Panc1 (cell line): ENCODE measurements at regions of chr12 and their contacts with region 1.

Region 1: DNA sequence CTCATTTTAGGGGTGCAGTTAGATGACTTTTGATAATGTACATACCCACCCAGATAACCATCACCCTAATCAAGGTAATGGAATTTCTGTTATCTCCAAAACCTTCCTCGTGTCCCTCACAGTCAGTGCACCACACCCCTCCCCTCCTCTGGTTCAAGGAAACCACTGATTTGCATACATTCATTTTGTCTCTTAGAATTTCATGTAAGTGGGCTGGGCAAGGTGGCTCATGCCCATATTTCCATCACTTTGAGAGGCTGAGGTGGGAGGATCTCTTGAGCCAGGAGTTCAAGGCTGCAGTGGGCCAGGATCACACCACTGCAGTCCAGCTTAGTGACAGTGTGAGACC is 15.7 kb downstream of the ADIPOR2 start:
- DNase-seq: no peak
- ATAC-seq: no peak
- H3K4me3 ChIP-seq: no peak overlapping the region
- H3K27ac ChIP-seq: no peak overlapping the region
- H3K4me1 ChIP-seq: peaks cover 11% of the 10 kb centered on the region; the same call in 1 of the 2 replicates
- H3K27me3 ChIP-seq: no peaks in the 10 kb centered on the region
- CTCF ChIP-seq: no peak

Region 2: GRCh38 chr12:570435-570925 is 1136.1 kb before region 1 on chr12:
- CTCF ChIA-PET with region 1: no interaction called
- POLR2A ChIA-PET with region 1: interaction called, 10 read pairs
- in situ Hi-C with region 1: no loop called
- intact Hi-C with region 1: no loop called
- DNase-seq: peak; percentile 46
- ATAC-seq: peak; percentile 82
- H3K4me3 ChIP-seq: peak overlapping the region; percentile 53 to 78
- H3K27ac ChIP-seq: peak overlapping the region; percentile 98
- H3K4me1 ChIP-seq: peaks cover 20% of the 10 kb centered on the region
- H3K27me3 ChIP-seq: no peaks in the 10 kb centered on the region
- CTCF ChIP-seq: no peak